IMR-90 (cell line): ENCODE measurements at regions of chr1 and their contacts with region 1.

Region 1: GRCh38 chr1:199009447-199009846 is 370.6 kb downstream of the PTPRC start:
- DNase-seq: no peak
- ATAC-seq: no peak
- H3K4me3 ChIP-seq: no peak overlapping the region
- H3K27ac ChIP-seq: no peak overlapping the region
- H3K4me1 ChIP-seq: no peaks in the 10 kb centered on the region
- H3K27me3 ChIP-seq: no peaks in the 10 kb centered on the region
- CTCF ChIP-seq: no peak
- POLR2A ChIP-seq: no peak
- RAD21 ChIP-seq: no peak

Region 2: DNA sequence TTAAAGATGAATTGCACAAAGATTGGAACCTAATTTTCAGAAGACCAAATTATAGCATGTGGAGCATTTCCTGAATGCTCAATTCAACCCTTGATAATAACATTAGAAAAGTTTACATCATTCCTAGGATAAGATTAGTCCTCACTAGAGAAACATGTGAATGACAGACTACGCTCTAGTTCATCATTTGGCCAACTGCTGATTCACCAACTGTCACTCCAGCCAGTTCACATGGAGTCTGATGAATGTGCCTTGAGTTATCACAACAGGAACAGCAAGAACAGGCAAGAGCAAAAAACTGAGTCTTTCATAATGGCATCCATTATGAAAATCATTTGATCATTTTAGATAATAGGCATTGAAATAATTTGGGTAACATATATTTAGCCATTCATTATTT is 45.2 kb after region 1 on chr1:
- CTCF ChIA-PET with region 1: no interaction called
- POLR2A ChIA-PET with region 1: no interaction called
- dilution Hi-C with region 1: no loop called
- in situ Hi-C with region 1: no loop called
- intact Hi-C with region 1: loop called (anchors 1 kb)
- DNase-seq: no peak
- ATAC-seq: no peak
- H3K4me3 ChIP-seq: no peak overlapping the region
- H3K27ac ChIP-seq: no peak overlapping the region
- H3K4me1 ChIP-seq: no peaks in the 10 kb centered on the region
- H3K27me3 ChIP-seq: no peaks in the 10 kb centered on the region
- CTCF ChIP-seq: no peak
- POLR2A ChIP-seq: no peak
- RAD21 ChIP-seq: no peak